CD8-positive, alpha-beta memory T cell (primary cell): ENCODE measurements at regions of chrX and their contacts with region 1.

Region 1: GRCh38 chrX:132292793-132293192 is 73.5 kb upstream of the RAP2C start:
- DNase-seq: peak in 3 of 5 donors; percentile 21 to 49 (median 38)
- H3K4me3 ChIP-seq: no peak overlapping the region
- H3K4me3 Mint-ChIP-seq: no peak overlapping the region
- H3K27ac ChIP-seq: no peak overlapping the region
- H3K27ac Mint-ChIP-seq: no peak overlapping the region
- H3K4me1 ChIP-seq: no peaks in the 10 kb centered on the region
- H3K4me1 Mint-ChIP-seq: peaks cover 0 to 6% (median 0%) of the 10 kb centered on the region in 3 donors
- H3K27me3 ChIP-seq: no peaks in the 10 kb centered on the region
- H3K27me3 Mint-ChIP-seq: no peaks in the 10 kb centered on the region

Region 2: DNA sequence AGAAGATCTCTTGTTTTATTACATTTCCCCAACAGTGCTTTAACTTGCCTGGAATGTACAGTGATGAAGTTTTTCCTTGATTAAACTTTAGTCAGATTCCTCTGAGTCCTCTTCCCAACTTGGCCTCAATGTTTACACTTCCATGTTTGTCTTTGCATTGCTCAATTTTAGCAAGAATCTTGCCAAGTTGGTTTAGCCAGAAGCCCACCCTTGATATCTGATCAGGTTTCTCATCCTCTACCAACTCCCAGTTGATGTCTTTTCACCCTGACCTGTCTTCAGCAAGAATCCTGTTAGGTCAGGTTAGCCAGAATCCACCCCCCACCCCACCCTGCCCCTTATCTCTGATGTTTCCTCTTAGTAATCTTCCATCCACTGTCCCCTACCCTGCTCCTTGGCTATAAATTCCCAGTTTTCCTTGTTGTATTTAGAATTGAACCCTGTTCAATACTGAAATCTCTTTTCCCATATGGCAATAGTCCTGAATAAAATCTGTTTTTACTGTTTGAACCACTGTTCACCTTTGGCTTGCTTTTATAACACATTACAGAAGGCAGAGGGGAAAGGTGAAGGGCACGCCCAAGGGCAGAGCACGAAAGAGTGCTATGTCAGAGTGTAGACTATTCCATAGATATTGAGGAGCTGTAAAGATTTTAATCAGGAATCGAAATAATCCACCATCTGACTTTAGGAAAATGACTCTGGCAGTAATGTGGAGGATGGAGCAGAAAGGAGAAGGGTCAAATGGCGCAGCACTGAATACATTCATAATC is 75.4 kb after region 1 on chrX:
- CTCF ChIA-PET with region 1: no interaction called
- POLR2A ChIA-PET with region 1: no interaction called
- DNase-seq: no peak
- H3K4me3 ChIP-seq: no peak overlapping the region
- H3K4me3 Mint-ChIP-seq: no peak overlapping the region
- H3K27ac ChIP-seq: no peak overlapping the region
- H3K27ac Mint-ChIP-seq: no peak overlapping the region
- H3K4me1 ChIP-seq: no peaks in the 10 kb centered on the region
- H3K4me1 Mint-ChIP-seq: peaks cover 0 to 4% (median 0%) of the 10 kb centered on the region in 3 donors
- H3K27me3 ChIP-seq: no peaks in the 10 kb centered on the region
- H3K27me3 Mint-ChIP-seq: no peaks in the 10 kb centered on the region

Region 3: DNA sequence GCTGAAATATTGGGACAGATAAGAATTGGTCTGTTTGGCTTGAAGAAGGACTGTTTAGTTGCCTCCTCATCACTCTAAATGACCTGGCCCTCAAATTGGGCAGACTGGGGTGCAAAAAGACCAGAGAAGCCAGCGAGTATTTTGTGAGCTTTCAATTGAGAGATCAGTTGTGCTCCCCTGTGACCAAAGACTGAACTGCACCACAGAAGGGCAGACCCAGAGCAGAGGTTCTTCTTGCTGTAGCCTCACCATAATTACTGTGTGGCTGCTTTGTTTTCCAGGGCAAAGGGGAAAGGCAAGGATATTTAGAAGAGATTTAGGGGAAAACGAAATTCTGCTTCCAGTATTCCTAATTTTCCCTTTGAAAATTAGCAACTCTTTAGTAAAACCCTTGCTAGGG is 300.1 kb after region 1 on chrX:
- CTCF ChIA-PET with region 1: interaction called, 14 read pairs
- POLR2A ChIA-PET with region 1: no interaction called
- DNase-seq: no peak
- H3K4me3 ChIP-seq: no peak overlapping the region
- H3K4me3 Mint-ChIP-seq: no peak overlapping the region
- H3K27ac ChIP-seq: no peak overlapping the region
- H3K27ac Mint-ChIP-seq: no peak overlapping the region
- H3K4me1 ChIP-seq: no peaks in the 10 kb centered on the region
- H3K4me1 Mint-ChIP-seq: no peaks in the 10 kb centered on the region
- H3K27me3 ChIP-seq: no peaks in the 10 kb centered on the region
- H3K27me3 Mint-ChIP-seq: peaks cover 0 to 9% of the 10 kb centered on the region in 2 donors

Region 4: GRCh38 chrX:132615391-132616131 is 322.8 kb after region 1 on chrX:
- CTCF ChIA-PET with region 1: interaction called, 37 read pairs
- POLR2A ChIA-PET with region 1: no interaction called
- DNase-seq: peak in 4 of 5 donors; percentile 5 to 33 (median 12)
- H3K4me3 ChIP-seq: no peak overlapping the region
- H3K4me3 Mint-ChIP-seq: no peak overlapping the region
- H3K27ac ChIP-seq: no peak overlapping the region
- H3K27ac Mint-ChIP-seq: no peak overlapping the region
- H3K4me1 ChIP-seq: no peaks in the 10 kb centered on the region
- H3K4me1 Mint-ChIP-seq: no peaks in the 10 kb centered on the region
- H3K27me3 ChIP-seq: no peaks in the 10 kb centered on the region
- H3K27me3 Mint-ChIP-seq: peaks cover 0 to 1% of the 10 kb centered on the region in 2 donors

Region 5: GRCh38 chrX:132622130-132622529 is 329.3 kb after region 1 on chrX:
- CTCF ChIA-PET with region 1: interaction called, 11 read pairs
- POLR2A ChIA-PET with region 1: no interaction called
- DNase-seq: no peak
- H3K4me3 ChIP-seq: no peak overlapping the region
- H3K4me3 Mint-ChIP-seq: no peak overlapping the region
- H3K27ac ChIP-seq: no peak overlapping the region
- H3K27ac Mint-ChIP-seq: no peak overlapping the region
- H3K4me1 ChIP-seq: no peaks in the 10 kb centered on the region
- H3K4me1 Mint-ChIP-seq: peaks cover 0 to 3% (median 0%) of the 10 kb centered on the region in 3 donors
- H3K27me3 ChIP-seq: no peaks in the 10 kb centered on the region
- H3K27me3 Mint-ChIP-seq: peaks cover 0 to 4% of the 10 kb centered on the region in 2 donors